Activated CD4-positive, alpha-beta memory T cell treated with anti-CD3 and anti-CD28 coated beads for 36 hours (primary cell): ENCODE measurements at regions of chr2 and their contacts with region 1.

Region 1: DNA sequence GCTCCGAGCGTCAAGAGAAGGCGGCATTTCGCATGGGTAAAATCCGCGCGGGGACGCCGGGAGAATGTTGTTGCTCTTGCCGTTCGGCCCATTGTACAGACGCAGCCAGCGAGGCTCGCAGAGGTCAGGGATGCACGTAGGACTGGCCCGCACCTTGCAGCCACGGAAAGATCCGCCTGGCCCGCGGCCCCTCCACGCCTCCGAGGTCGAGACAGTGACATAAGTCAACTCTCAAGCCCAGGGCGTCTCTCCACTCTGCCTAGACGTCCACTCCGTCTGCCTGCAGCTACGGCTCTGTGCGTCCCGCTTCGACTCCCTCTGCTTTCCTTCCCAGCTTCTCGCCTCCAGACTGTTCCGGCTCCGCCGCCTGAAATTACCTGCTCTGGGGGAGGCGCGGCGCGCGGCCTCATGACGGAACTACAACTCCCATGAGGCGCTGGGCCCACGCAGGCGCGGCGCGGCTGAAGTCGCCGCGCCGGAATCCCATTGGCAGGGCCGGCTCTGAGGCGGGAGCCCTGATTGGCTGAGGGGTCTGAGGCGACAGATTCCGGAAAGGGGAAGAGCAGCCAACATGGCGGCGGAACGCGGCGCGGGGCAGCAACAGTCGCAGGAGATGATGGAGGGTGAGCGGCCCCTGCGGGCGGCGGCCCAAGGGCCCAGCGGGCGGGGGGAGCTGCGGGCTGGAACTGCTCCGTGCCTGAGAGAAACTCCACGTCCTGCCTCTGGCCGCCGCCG is at the start of gene PPP1R7:
- DNase-seq: peak; percentile 98
- H3K4me3 Mint-ChIP-seq: peak within 1 kb of the TSS; percentile 93
- H3K27ac Mint-ChIP-seq: peak within 1 kb of the TSS; percentile 86
- H3K4me1 Mint-ChIP-seq: peaks cover 56% of the 10 kb centered on the region
- H3K27me3 Mint-ChIP-seq: no peaks in the 10 kb centered on the region
- total RNA-seq, gene PPP1R7: 123 to 132 TPM

Region 2: DNA sequence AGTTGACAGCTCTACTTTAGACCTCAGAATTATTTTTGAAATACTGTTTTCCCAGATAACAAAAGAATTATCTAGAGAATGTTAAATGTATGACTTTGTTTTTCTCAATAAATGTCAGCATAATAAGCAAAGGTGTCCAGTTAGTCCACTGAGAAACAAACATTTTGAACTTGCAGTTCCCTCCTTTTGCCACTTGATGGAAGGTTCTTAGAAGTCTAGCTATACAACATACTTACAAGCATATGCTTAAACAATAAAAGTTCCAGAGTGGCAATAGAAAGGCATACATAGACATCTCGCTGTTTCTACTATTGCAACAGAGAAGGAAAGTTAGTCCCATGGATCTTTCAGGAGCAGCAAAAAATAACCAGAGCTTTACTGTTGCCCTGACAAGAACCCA is 1136.7 kb before region 1 on chr2:
- CTCF ChIA-PET with region 1: no interaction called
- POLR2A ChIA-PET with region 1: no interaction called
- intact Hi-C with region 1: no loop called
- DNase-seq: no peak
- H3K4me3 Mint-ChIP-seq: no peak overlapping the region
- H3K27ac Mint-ChIP-seq: no peak overlapping the region
- H3K4me1 Mint-ChIP-seq: no peaks in the 10 kb centered on the region
- H3K27me3 Mint-ChIP-seq: no peaks in the 10 kb centered on the region

Region 3: DNA sequence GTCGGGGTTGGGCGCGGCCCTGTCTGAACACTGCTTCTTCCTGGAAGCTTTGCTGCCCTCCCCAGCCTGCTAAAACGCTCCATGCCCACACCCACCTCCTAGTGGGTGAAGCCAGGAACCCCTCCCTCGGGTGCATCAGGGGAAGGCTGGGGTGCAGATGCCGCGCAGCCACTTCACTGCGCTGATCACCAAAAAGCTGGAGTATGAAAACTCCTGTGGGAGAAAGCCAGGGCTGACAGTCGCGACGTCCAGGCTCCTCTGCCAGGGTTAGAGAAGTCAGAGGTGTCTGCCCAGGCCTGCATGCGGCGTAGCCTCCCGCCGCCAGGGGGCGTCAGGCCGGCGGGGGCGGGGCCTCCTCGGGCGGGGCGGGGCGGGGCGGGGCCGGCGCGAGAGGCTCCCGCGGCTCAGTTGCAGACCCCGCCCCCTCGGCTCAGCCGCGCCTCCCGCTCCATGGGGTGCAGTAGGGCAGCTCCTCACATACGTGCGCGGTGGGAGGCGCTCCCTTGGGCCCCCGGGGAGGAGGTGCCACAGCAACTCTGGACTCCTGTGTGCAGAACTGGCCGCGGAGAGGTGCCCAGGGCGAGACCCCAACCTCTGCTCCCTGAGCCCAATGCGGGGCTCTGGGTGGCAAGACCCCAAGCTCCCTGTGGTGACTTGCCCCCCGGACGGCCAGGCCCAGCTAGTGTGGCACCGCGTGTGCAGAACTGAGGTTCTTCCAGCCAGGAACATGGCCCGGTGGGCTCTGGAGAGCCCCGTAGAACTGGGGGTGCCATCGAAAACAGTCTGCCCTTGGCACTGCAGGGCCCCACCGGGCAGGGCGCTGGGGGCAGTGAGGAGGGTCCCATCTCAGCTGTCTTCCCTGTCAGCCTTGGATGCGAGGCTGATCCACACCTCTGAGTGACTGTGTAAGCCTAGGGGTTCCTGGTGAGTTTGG is 583.6 kb before region 1 on chr2:
- CTCF ChIA-PET with region 1: no interaction called
- POLR2A ChIA-PET with region 1: interaction called, 6 read pairs
- intact Hi-C with region 1: loop called (anchors 5 kb)
- DNase-seq: peak; percentile 96
- H3K4me3 Mint-ChIP-seq: peak overlapping the region; percentile 93
- H3K27ac Mint-ChIP-seq: peak overlapping the region; percentile 98
- H3K4me1 Mint-ChIP-seq: peaks cover 64% of the 10 kb centered on the region
- H3K27me3 Mint-ChIP-seq: no peaks in the 10 kb centered on the region

Region 4: GRCh38 chr2:240913810-240914644 is 236.1 kb before region 1 on chr2:
- CTCF ChIA-PET with region 1: no interaction called
- POLR2A ChIA-PET with region 1: no interaction called
- intact Hi-C with region 1: loop called (anchors 5 kb)
- DNase-seq: peak; percentile 72
- H3K4me3 Mint-ChIP-seq: no peak overlapping the region
- H3K27ac Mint-ChIP-seq: no peak overlapping the region
- H3K4me1 Mint-ChIP-seq: no peaks in the 10 kb centered on the region
- H3K27me3 Mint-ChIP-seq: peaks cover 21% of the 10 kb centered on the region

Region 5: GRCh38 chr2:241069821-241070281 is 80.2 kb before region 1 on chr2:
- CTCF ChIA-PET with region 1: no interaction called
- POLR2A ChIA-PET with region 1: no interaction called
- intact Hi-C with region 1: no loop called
- DNase-seq: no peak
- H3K4me3 Mint-ChIP-seq: no peak overlapping the region
- H3K27ac Mint-ChIP-seq: no peak overlapping the region
- H3K4me1 Mint-ChIP-seq: no peaks in the 10 kb centered on the region
- H3K27me3 Mint-ChIP-seq: no peaks in the 10 kb centered on the region

Region 6: GRCh38 chr2:241102239-241102803 is 47.8 kb before region 1 on chr2 and contains the start of gene MTERF4:
- CTCF ChIA-PET with region 1: no interaction called
- POLR2A ChIA-PET with region 1: interaction called, 28 read pairs
- intact Hi-C with region 1: loop called (anchors 2 kb)
- DNase-seq: peak; percentile 93
- H3K4me3 Mint-ChIP-seq: peak within 1 kb of the TSS; percentile 91
- H3K27ac Mint-ChIP-seq: peak within 1 kb of the TSS; percentile 95
- H3K4me1 Mint-ChIP-seq: peaks cover 61% of the 10 kb centered on the region
- H3K27me3 Mint-ChIP-seq: no peaks in the 10 kb centered on the region
- total RNA-seq, gene MTERF4: 43.9 to 46.0 TPM

Region 7: GRCh38 chr2:241125626-241126025 is 24.5 kb before region 1 on chr2:
- CTCF ChIA-PET with region 1: interaction called, 4 read pairs
- POLR2A ChIA-PET with region 1: interaction called, 3 read pairs
- intact Hi-C with region 1: loop called (anchors 2 kb)
- DNase-seq: no peak
- H3K4me3 Mint-ChIP-seq: peak overlapping the region; percentile 43
- H3K27ac Mint-ChIP-seq: peak overlapping the region; percentile 99
- H3K4me1 Mint-ChIP-seq: peaks cover 70% of the 10 kb centered on the region
- H3K27me3 Mint-ChIP-seq: no peaks in the 10 kb centered on the region

Region 8: GRCh38 chr2:241508240-241509154 is 358.4 kb after region 1 on chr2 and contains the start of gene STK25:
- CTCF ChIA-PET with region 1: no interaction called
- POLR2A ChIA-PET with region 1: no interaction called
- intact Hi-C with region 1: loop called (anchors 5 kb)
- DNase-seq: peak; percentile 98
- H3K4me3 Mint-ChIP-seq: peak within 1 kb of the TSS; percentile 79
- H3K27ac Mint-ChIP-seq: peak within 1 kb of the TSS; percentile 56
- H3K4me1 Mint-ChIP-seq: peaks cover 19% of the 10 kb centered on the region
- H3K27me3 Mint-ChIP-seq: no peaks in the 10 kb centered on the region
- total RNA-seq, gene STK25: 97.9 to 99.1 TPM